H1 (cell line): ENCODE measurements at regions of chr15 and their contacts with region 1.

Region 1: GRCh38 chr15:68550481-68551295 is 28.1 kb upstream of the CORO2B start:
- DNase-seq: peak; percentile 44 to 97
- H3K4me3 ChIP-seq: no peak overlapping the region
- H3K27ac ChIP-seq: no peak overlapping the region
- H3K4me1 ChIP-seq: no peaks in the 10 kb centered on the region
- H3K27me3 ChIP-seq: no peaks in the 10 kb centered on the region; a peak in 1 of 7 replicates
- CTCF ChIP-seq: peak; percentile 73 to 96 (median 87)
- EP300 ChIP-seq: no peak
- POLR2A ChIP-seq: no peak
- RAD21 ChIP-seq: peak; percentile 92 to 97

Region 2: GRCh38 chr15:68232937-68233336 is 317.8 kb before region 1 on chr15:
- CTCF ChIA-PET with region 1: no interaction called
- POLR2A ChIA-PET with region 1: no interaction called
- DNase-seq: peak in 1 of 2 experiments; percentile 35
- H3K4me3 ChIP-seq: no peak overlapping the region
- H3K27ac ChIP-seq: no peak overlapping the region
- H3K4me1 ChIP-seq: peaks cover 0 to 12% (median 8%) of the 10 kb centered on the region in 4 experiments; a peak in 6 of 7 replicates
- H3K27me3 ChIP-seq: peaks cover 0 to 2% (median 0%) of the 10 kb centered on the region in 4 experiments; a peak in 1 of 7 replicates
- CTCF ChIP-seq: no peak
- EP300 ChIP-seq: no peak
- POLR2A ChIP-seq: no peak
- RAD21 ChIP-seq: no peak

Region 3: GRCh38 chr15:68389936-68390790 is 160.5 kb before region 1 on chr15:
- CTCF ChIA-PET with region 1: no interaction called
- POLR2A ChIA-PET with region 1: no interaction called
- DNase-seq: peak in 1 of 2 experiments; percentile 20
- H3K4me3 ChIP-seq: no peak overlapping the region
- H3K27ac ChIP-seq: no peak overlapping the region
- H3K4me1 ChIP-seq: no peaks in the 10 kb centered on the region
- H3K27me3 ChIP-seq: no peaks in the 10 kb centered on the region
- CTCF ChIP-seq: no peak
- EP300 ChIP-seq: no peak
- POLR2A ChIP-seq: no peak
- RAD21 ChIP-seq: no peak

Region 4: DNA sequence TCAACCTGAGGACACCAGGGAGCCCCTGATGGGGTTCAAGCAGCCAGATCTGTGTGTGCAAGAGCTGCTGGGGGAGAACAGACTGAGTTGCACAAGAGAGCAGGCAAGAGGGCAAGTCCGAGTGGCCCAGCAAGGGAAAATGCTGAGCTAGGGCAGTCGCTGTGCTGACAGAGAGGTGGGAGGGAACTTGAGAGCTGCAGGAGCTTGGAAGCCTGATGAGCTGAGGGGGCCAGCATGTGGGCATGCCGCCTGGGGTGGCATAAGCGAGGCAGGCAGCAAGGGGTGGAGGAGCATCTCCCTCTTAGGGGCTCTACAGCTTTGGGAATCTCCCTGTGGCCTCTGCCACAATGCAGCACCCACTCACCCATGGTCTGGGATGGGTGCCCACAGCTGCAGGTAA is 23.4 kb after region 1 on chr15:
- CTCF ChIA-PET with region 1: interaction called, 13 read pairs
- POLR2A ChIA-PET with region 1: no interaction called
- DNase-seq: no peak
- H3K4me3 ChIP-seq: no peak overlapping the region
- H3K27ac ChIP-seq: no peak overlapping the region
- H3K4me1 ChIP-seq: peaks cover 16 to 55% (median 34%) of the 10 kb centered on the region in 4 experiments
- H3K27me3 ChIP-seq: peaks cover 0 to 22% (median 15%) of the 10 kb centered on the region in 4 experiments; a peak in 5 of 7 replicates
- CTCF ChIP-seq: no peak
- EP300 ChIP-seq: no peak
- POLR2A ChIP-seq: no peak
- RAD21 ChIP-seq: no peak

Region 5: DNA sequence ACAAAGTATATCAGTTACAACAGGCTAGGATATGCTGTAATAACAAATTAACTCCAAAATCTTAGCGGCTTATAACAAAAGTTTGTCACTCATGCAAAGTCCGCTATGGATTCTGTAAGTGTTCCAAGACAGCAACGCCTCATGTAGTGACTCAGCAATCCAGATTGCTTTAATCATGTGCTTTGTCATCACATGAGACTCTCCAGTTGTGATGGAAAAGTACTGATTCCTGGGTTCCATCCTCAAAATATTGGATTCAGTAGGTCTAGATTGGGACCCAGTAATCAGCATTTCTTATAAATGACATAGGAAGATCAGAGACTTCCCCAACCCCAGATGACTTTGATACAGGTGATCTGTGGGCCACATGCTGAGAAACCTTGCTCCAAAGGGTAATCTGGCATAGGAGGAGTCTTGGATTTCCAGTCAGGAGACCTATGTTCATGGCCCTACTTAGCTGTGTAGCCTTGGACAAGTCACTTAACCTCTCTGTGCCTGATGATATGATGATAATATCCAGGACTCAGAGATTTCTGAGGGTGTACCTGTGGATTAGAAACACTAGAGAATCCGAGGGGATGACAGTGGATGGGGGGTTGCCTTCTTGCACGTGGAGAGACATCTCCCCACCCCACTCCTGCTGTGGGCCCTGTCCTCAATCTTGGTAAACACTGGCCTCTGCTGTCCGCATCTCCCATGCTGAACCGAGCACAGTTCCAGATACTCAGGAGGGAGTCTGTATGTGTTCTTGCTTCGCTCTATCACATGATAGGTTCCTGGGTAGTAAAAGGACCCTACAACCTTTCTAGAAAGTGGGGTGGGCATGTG is 93.6 kb after region 1 on chr15:
- CTCF ChIA-PET with region 1: interaction called, 10 read pairs
- POLR2A ChIA-PET with region 1: no interaction called
- DNase-seq: no peak
- H3K4me3 ChIP-seq: no peak overlapping the region
- H3K27ac ChIP-seq: no peak overlapping the region
- H3K4me1 ChIP-seq: peaks cover 0 to 12% (median 5%) of the 10 kb centered on the region in 4 experiments; a peak in 5 of 7 replicates
- H3K27me3 ChIP-seq: no peaks in the 10 kb centered on the region
- CTCF ChIP-seq: peak in 2 of 3 experiments; percentile 16 to 18; a peak in 2 of 4 replicates
- EP300 ChIP-seq: no peak
- POLR2A ChIP-seq: no peak
- RAD21 ChIP-seq: peak; percentile 31 to 51